ENCODE measurements at regions of chr7 and their contacts with region 1.

Region 1: DNA sequence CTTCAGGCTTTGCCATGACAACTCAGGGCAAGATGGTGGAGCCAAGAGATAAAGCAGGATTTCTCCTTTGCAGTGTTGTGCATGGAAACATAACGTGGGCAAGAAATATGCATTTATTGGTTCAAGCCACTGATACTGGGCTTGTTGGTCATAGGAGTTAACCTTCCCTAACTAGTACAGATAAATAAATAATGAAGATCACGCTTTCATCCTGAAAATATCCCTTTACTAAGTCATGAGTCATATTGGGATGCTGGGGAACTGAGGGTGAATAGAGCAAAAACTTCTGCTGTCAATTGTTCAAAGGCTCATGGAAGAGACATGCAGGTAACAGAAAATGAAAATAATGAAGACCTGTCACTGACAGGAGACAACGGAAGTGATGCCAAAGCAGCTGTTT is 55.5 kb downstream of the TES start:
- DNase-seq: no peak
- H3K4me3 ChIP-seq: no peak overlapping the region
- H3K27ac ChIP-seq: no peak overlapping the region
- H3K4me1 ChIP-seq: peaks cover 27% of the 10 kb centered on the region
- H3K27me3 ChIP-seq: no peaks in the 10 kb centered on the region
- CTCF ChIP-seq: no peak

Region 2: GRCh38 chr7:116340943-116341907 is 75.3 kb after region 1 on chr7:
- intact Hi-C with region 1: loop called (anchors 5 kb)
- DNase-seq: no peak
- H3K4me3 ChIP-seq: no peak overlapping the region
- H3K27ac ChIP-seq: peak overlapping the region; percentile 57
- H3K4me1 ChIP-seq: peaks cover 27% of the 10 kb centered on the region
- H3K27me3 ChIP-seq: no peaks in the 10 kb centered on the region
- CTCF ChIP-seq: peak; percentile 46

Measured in left ventricle myocardium inferior (tissue), 1 donor.